ENCODE measurements at regions of chr4 and their contacts with region 1.

Region 1: GRCh38 chr4:72295966-72296557 is 264.3 kb downstream of the NPFFR2 start:
- DNase-seq: no peak
- ATAC-seq: peak; percentile 51 to 84 (median 71)
- H3K4me3 ChIP-seq: no peak overlapping the region
- H3K27ac ChIP-seq: no peak overlapping the region
- H3K4me1 ChIP-seq: peaks cover 0 to 4% (median 0%) of the 10 kb centered on the region in 12 donors
- H3K27me3 ChIP-seq: no peaks in the 10 kb centered on the region
- CTCF ChIP-seq: peak; percentile 47 to 79 (median 64)
- POLR2A ChIP-seq: no peak

Region 2: GRCh38 chr4:72468904-72469502 is 172.9 kb after region 1 on chr4:
- intact Hi-C with region 1: loop called in 4 of 10 experiments (anchors 10 kb)
- DNase-seq: no peak
- ATAC-seq: no peak
- H3K4me3 ChIP-seq: no peak overlapping the region
- H3K27ac ChIP-seq: no peak overlapping the region
- H3K4me1 ChIP-seq: no peaks in the 10 kb centered on the region
- H3K27me3 ChIP-seq: no peaks in the 10 kb centered on the region
- CTCF ChIP-seq: peak; percentile 37 to 80 (median 60)
- POLR2A ChIP-seq: no peak

Region 3: GRCh38 chr4:73019462-73020047 is 723.5 kb after region 1 on chr4:
- intact Hi-C with region 1: loop called in 4 of 10 experiments (anchors 10 kb)
- DNase-seq: no peak
- ATAC-seq: no peak
- H3K4me3 ChIP-seq: no peak overlapping the region
- H3K27ac ChIP-seq: no peak overlapping the region
- H3K4me1 ChIP-seq: no peaks in the 10 kb centered on the region
- H3K27me3 ChIP-seq: no peaks in the 10 kb centered on the region
- CTCF ChIP-seq: peak; percentile 46 to 86 (median 70)
- POLR2A ChIP-seq: no peak

Measured in heart left ventricle (tissue), 16 donors.